ENCODE measurements at regions of chr4 and their contacts with region 1.

Region 1: DNA sequence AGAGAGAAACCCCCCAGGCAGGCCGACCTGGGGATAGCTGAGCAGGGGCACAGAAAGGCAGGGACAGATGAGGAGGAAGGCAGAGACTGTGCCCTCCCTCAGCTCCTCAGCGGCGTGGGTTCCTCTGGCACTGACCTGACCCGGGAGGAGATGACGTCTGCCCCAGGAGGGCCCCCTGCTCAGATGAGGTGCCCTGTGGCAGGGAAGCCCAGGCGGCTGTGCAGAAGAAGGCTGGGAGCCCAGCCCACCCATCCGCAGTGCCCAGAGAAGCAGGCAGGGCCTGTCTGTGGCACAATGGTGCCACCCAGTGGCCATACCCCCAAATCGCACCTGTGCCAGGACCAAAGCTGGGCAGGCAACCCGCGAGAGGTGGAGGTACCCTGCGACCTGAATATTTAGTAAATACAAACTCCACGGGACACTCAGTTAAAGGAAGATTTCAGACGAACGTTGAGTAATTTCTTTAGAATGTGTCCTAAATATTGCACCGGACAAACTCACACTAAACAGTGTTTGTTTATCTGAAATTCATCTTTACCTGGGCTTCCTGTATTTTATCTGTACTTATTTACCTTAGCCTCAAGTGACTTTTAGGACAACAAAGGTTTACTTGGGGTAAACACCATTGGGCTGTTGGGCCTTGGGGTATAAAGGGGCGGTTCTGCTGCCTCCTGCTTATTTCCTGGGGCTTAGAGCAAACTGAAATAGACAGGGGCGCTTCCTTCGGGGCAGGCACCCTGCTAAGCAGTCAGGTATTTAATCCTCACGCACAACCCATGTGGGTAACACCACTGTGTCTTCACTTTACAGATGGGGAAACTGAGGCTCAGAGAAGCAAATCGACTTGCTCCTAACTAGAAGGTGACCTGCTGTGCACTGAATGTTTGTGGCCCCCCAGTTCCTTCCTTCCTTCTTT is 46.5 kb upstream of the HMX1 start:
- DNase-seq: peak; percentile 57
- ATAC-seq: peak; percentile 82
- H3K4me3 Mint-ChIP-seq: no peak overlapping the region
- H3K27ac Mint-ChIP-seq: no peak overlapping the region
- H3K4me1 Mint-ChIP-seq: no peaks in the 10 kb centered on the region
- H3K27me3 Mint-ChIP-seq: peaks cover 5% of the 10 kb centered on the region
- CTCF ChIP-seq: peak; percentile 43

Region 2: GRCh38 chr4:8241895-8242696 is 676.0 kb before region 1 on chr4:
- CTCF ChIA-PET with region 1: no interaction called
- POLR2A ChIA-PET with region 1: no interaction called
- intact Hi-C with region 1: loop called (anchors 2 kb)
- DNase-seq: peak; percentile 85
- ATAC-seq: peak; percentile 74
- H3K4me3 Mint-ChIP-seq: no peak overlapping the region
- H3K27ac Mint-ChIP-seq: no peak overlapping the region
- H3K4me1 Mint-ChIP-seq: peaks cover 21% of the 10 kb centered on the region
- H3K27me3 Mint-ChIP-seq: no peaks in the 10 kb centered on the region
- CTCF ChIP-seq: peak; percentile 83

Region 3: GRCh38 chr4:8607603-8608481 is 310.3 kb before region 1 on chr4:
- CTCF ChIA-PET with region 1: interaction called, 3 read pairs
- POLR2A ChIA-PET with region 1: no interaction called
- intact Hi-C with region 1: loop called (anchors 10 kb)
- DNase-seq: peak; percentile 34
- ATAC-seq: peak; percentile 25
- H3K4me3 Mint-ChIP-seq: no peak overlapping the region
- H3K27ac Mint-ChIP-seq: no peak overlapping the region
- H3K4me1 Mint-ChIP-seq: no peaks in the 10 kb centered on the region
- H3K27me3 Mint-ChIP-seq: no peaks in the 10 kb centered on the region
- CTCF ChIP-seq: no peak

Region 4: GRCh38 chr4:8905773-8906667 is 12.1 kb before region 1 on chr4:
- CTCF ChIA-PET with region 1: no interaction called
- POLR2A ChIA-PET with region 1: no interaction called
- intact Hi-C with region 1: no loop called
- DNase-seq: peak; percentile 6
- ATAC-seq: no peak
- H3K4me3 Mint-ChIP-seq: no peak overlapping the region
- H3K27ac Mint-ChIP-seq: no peak overlapping the region
- H3K4me1 Mint-ChIP-seq: no peaks in the 10 kb centered on the region
- H3K27me3 Mint-ChIP-seq: no peaks in the 10 kb centered on the region
- CTCF ChIP-seq: no peak

Measured in activated B cell treated with CpG ODN at 0.5 μM for 24 hours (primary cell).